ENCODE measurements at regions of chr17 and their contacts with region 1.

Region 1: DNA sequence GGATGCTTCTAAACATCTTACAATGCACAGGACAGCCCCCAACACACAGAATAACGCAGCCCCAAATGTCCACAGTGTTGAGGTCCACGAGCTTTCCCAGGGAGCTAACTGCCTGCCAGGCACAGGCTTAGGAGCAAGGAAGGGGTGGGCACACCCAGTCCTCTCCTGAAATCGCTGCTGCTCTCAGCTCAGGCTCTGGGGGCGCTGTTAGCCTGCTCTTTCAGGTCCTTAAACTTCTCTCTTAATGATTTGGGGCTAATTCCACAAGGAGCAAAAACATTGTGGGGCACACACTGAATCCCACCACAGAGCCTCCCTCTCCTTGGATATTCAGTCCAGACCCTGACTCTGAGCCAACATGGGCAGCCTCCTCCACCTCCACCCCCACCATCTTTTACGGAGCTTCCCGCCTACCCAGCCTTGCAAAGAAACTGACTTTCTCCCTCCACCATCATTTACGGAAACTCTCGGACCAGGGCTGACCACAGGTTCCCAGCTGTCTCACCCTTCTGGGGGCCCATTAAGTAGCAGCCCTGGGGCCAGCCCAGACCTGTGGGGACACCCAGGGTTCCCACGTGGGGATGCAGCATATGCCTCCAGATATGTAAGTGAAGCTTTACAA is 1.1 kb downstream of the CD300H start:
- DNase-seq: peak; percentile 82
- ATAC-seq: peak; percentile 96
- H3K4me3 Mint-ChIP-seq: no peak overlapping the region
- H3K27ac Mint-ChIP-seq: no peak overlapping the region
- H3K4me1 Mint-ChIP-seq: peaks cover 7% of the 10 kb centered on the region; the same call in 1 of the 2 replicates
- H3K27me3 Mint-ChIP-seq: peaks cover 18% of the 10 kb centered on the region
- CTCF ChIP-seq: peak; percentile 77

Region 2: DNA sequence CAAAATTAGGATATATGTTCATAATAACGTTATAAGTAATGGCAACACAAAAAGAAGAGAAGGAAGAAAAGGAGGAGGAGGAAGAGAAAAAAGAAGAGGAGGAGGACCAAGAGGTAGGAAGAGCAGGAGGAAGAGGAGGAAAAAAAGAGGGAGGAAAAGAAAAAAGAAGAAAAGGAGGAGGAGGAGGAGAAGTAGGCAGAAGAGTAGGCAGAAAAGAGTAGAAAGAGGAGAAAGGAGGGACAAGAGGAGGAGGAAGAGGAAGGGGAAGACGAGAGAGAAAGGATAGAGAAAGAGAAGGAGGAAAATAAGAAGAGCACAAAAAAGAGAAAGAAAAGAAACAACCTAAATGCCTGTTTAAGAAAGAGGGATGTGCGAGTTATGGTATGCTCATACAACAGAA is 29.4 kb before region 1 on chr17:
- CTCF ChIA-PET with region 1: interaction called, 10 read pairs
- POLR2A ChIA-PET with region 1: no interaction called
- DNase-seq: no peak
- ATAC-seq: no peak
- H3K4me3 Mint-ChIP-seq: no peak overlapping the region
- H3K27ac Mint-ChIP-seq: no peak overlapping the region
- H3K4me1 Mint-ChIP-seq: peaks cover 9% of the 10 kb centered on the region
- H3K27me3 Mint-ChIP-seq: peaks cover 5% of the 10 kb centered on the region
- CTCF ChIP-seq: no peak

Region 3: GRCh38 chr17:74554909-74555308 is 11.3 kb before region 1 on chr17:
- CTCF ChIA-PET with region 1: interaction called, 23 read pairs
- POLR2A ChIA-PET with region 1: no interaction called
- DNase-seq: no peak
- ATAC-seq: no peak
- H3K4me3 Mint-ChIP-seq: no peak overlapping the region
- H3K27ac Mint-ChIP-seq: no peak overlapping the region
- H3K4me1 Mint-ChIP-seq: peaks cover 21% of the 10 kb centered on the region
- H3K27me3 Mint-ChIP-seq: peaks cover 54% of the 10 kb centered on the region
- CTCF ChIP-seq: no peak

Region 4: GRCh38 chr17:74601944-74602572 is 35.8 kb after region 1 on chr17:
- CTCF ChIA-PET with region 1: interaction called, 17 read pairs
- POLR2A ChIA-PET with region 1: no interaction called
- DNase-seq: peak; percentile 61
- ATAC-seq: peak; percentile 79
- H3K4me3 Mint-ChIP-seq: no peak overlapping the region
- H3K27ac Mint-ChIP-seq: no peak overlapping the region
- H3K4me1 Mint-ChIP-seq: peaks cover 7% of the 10 kb centered on the region
- H3K27me3 Mint-ChIP-seq: peaks cover 6% of the 10 kb centered on the region
- CTCF ChIP-seq: peak; percentile 48

Measured in WTC11 (cell line).